Sciatic nerve (tissue), 2 donors: ENCODE measurements at regions of chr19 and their contacts with region 1.

Region 1: DNA sequence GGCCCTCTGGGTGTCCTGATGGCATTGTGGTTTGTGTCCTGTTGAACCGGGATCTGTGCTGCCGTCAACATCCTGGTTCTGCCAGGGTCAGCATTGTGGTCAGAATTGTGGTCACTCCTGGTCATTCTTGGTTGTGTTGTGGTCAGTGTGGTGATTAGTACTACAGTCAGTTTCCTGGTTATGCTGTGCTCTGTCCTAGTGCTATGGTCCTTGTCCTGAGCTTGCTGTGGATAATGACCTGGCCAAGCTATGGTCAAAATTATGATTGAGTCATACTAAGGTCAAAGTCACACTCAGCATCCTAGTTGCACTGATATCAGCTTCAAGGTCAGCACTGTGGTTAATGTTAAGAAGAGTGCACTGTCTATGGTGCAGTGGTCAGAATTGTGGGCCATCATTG is 4.5 kb upstream of the OLFM2 start:
- DNase-seq: no peak
- ATAC-seq: no peak

Region 2: DNA sequence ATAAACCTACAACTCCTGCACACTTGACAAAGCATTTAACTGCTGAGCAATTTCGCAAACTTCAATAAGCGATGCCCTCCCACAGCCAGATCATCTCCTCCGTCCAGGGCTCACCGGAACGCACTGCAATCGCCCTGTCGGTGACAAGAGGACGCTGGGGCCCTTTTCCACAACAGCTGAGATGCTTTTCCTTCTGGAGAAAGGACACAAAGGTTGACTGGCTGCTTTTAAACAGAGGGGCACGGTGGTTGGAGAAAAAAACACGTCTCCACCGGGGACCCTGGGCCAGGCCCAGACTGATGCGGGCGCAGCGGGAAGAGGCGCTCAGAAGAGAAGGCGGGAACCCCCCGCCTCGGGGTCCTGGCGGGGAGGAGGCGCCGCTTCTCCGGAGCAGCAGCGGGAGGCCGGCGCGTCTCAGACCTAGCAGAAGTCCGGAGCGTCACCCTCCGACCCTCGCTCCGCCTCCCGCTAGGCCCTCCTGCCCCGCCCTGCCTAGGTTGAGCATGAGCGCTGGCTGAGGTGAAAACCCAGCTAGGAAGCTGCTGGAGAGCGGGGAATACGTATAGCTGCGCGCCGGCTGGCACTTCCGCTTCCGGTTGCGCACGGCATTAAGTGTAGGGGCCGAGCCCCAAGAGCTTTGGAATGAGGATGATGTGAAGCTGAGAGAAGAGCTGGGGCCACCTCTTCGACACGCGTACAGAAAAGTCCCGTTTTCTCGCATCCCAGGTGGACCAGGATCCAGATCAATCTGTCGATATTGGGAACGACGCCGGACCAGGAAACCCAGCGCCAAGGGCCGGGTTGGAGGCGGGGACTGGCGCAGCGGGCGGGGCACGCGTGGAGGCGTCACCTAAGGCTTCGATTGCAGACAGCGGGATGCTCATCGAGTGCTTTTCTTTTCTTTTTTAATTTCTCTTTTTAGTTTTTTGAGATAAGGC is 172.3 kb before region 1 on chr19 and contains the start of gene ZNF846:
- intact Hi-C with region 1: no loop called
- DNase-seq: peak; percentile 94
- ATAC-seq: peak; percentile 100
- total RNA-seq, gene ZNF846: 27.0 TPM

Region 3: GRCh38 chr19:9996541-9996940 is 55.8 kb after region 1 on chr19:
- intact Hi-C with region 1: loop called (anchors 5 kb)
- DNase-seq: no peak
- ATAC-seq: no peak

Region 4: DNA sequence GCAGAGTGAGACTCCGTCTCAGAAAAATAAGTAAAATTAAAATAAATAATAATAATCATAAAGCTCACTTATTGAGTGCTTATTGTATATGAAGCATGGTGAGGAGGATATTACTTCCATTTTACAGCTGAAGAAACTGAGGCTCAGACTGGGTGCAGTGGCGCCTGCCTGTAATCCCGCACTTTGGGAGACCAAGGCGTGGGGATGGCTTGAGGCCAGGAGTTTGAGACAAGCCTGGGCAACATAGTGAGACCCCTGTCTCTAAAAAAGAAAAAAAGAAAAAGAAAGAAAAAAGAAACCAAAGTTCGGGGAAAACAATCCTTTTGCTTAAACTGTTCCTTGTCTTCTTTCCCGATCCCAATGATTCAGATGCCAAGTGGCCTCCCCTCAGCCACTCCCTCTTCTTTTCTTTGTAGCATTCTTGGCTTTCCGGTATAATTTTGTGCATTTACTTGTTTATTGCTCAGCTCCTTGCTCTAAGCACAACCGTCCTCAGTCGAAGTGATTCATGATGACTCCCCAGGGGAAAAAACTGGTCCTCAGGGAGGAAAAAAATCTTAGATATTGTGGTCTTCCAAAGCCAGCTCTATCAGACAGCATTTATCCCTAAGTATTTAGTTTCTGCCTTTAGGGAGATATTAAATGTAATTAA is 179.9 kb after region 1 on chr19:
- intact Hi-C with region 1: no loop called
- DNase-seq: no peak
- ATAC-seq: peak; percentile 54